ENCODE measurements at regions of chr4 and their contacts with region 1.

Region 1: GRCh38 chr4:36399762-36400353 is 118.4 kb downstream of the DTHD1 start:
- DNase-seq: peak; percentile 66
- ATAC-seq: peak; percentile 55
- H3K4me3 Mint-ChIP-seq: no peak overlapping the region
- H3K27ac Mint-ChIP-seq: no peak overlapping the region
- H3K4me1 Mint-ChIP-seq: peaks cover 5% of the 10 kb centered on the region
- H3K27me3 Mint-ChIP-seq: peaks cover 14% of the 10 kb centered on the region

Region 2: GRCh38 chr4:36208893-36209473 is 190.9 kb before region 1 on chr4:
- CTCF ChIA-PET with region 1: no interaction called
- DNase-seq: peak; percentile 78
- ATAC-seq: peak; percentile 88
- H3K4me3 Mint-ChIP-seq: peak overlapping the region; percentile 49
- H3K27ac Mint-ChIP-seq: peak overlapping the region; percentile 85
- H3K4me1 Mint-ChIP-seq: peaks cover 56% of the 10 kb centered on the region
- H3K27me3 Mint-ChIP-seq: no peaks in the 10 kb centered on the region

Region 3: GRCh38 chr4:36244257-36245079 is 155.4 kb before region 1 on chr4 and contains the start of gene ARAP2:
- CTCF ChIA-PET with region 1: interaction called, 21 read pairs
- DNase-seq: peak; percentile 80
- ATAC-seq: peak; percentile 77
- H3K4me3 Mint-ChIP-seq: peak within 1 kb of the TSS; percentile 93
- H3K27ac Mint-ChIP-seq: peak within 1 kb of the TSS; percentile 96
- H3K4me1 Mint-ChIP-seq: peaks cover 39% of the 10 kb centered on the region
- H3K27me3 Mint-ChIP-seq: no peaks in the 10 kb centered on the region
- total RNA-seq, gene ARAP2: 52.9 to 76.1 TPM

Region 4: GRCh38 chr4:36255577-36255976 is 144.3 kb before region 1 on chr4:
- CTCF ChIA-PET with region 1: interaction called, 12 read pairs
- DNase-seq: peak; percentile 81
- ATAC-seq: peak; percentile 84
- H3K4me3 Mint-ChIP-seq: peak overlapping the region; percentile 53
- H3K27ac Mint-ChIP-seq: peak overlapping the region; percentile 94
- H3K4me1 Mint-ChIP-seq: peaks cover 52% of the 10 kb centered on the region
- H3K27me3 Mint-ChIP-seq: no peaks in the 10 kb centered on the region

Region 5: DNA sequence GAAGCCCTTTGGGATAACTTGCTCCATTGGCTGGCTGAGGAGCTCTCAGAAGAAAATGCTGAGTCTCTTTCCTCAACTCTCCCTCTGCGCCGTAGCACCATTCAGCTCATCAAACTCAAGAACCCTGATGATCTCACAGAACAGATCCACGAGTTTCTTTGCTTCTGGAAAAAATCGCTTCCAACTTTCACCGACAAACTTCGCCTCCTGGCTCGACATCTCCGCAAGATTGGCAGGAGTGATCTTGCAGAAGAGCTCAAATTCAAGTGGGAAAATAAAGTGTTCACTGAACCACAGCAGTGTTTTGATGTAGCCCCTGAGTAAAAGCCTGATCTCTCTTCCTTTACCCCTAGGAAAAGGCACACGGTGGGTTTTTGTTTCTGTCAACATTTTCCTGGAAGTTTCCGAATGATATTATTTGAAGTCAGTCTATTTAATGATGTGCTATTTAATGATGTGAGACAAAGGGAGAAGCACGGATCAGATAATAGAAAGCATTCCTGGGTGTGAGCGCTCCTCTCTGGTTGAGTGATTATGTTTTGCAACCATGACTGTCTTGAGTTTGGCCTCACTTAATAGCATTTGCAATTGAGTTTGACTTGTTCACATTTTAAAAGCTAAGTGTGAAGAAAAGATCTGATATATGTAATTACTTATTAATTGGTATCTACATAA is 56.2 kb before region 1 on chr4:
- CTCF ChIA-PET with region 1: interaction called, 64 read pairs
- DNase-seq: no peak
- ATAC-seq: no peak
- H3K4me3 Mint-ChIP-seq: no peak overlapping the region
- H3K27ac Mint-ChIP-seq: no peak overlapping the region
- H3K4me1 Mint-ChIP-seq: peaks cover 6% of the 10 kb centered on the region
- H3K27me3 Mint-ChIP-seq: no peaks in the 10 kb centered on the region

Region 6: GRCh38 chr4:36351082-36351666 is 48.7 kb before region 1 on chr4:
- CTCF ChIA-PET with region 1: interaction called, 64 read pairs
- DNase-seq: peak; percentile 84
- ATAC-seq: peak; percentile 80
- H3K4me3 Mint-ChIP-seq: no peak overlapping the region
- H3K27ac Mint-ChIP-seq: no peak overlapping the region
- H3K4me1 Mint-ChIP-seq: peaks cover 35% of the 10 kb centered on the region
- H3K27me3 Mint-ChIP-seq: no peaks in the 10 kb centered on the region

Region 7: GRCh38 chr4:36363024-36363423 is 36.8 kb before region 1 on chr4:
- CTCF ChIA-PET with region 1: interaction called, 23 read pairs
- DNase-seq: no peak
- ATAC-seq: no peak
- H3K4me3 Mint-ChIP-seq: no peak overlapping the region
- H3K27ac Mint-ChIP-seq: no peak overlapping the region
- H3K4me1 Mint-ChIP-seq: no peaks in the 10 kb centered on the region
- H3K27me3 Mint-ChIP-seq: no peaks in the 10 kb centered on the region

Region 8: GRCh38 chr4:36385951-36386571 is 13.8 kb before region 1 on chr4:
- CTCF ChIA-PET with region 1: interaction called, 23 read pairs
- DNase-seq: peak; percentile 82
- ATAC-seq: peak; percentile 94
- H3K4me3 Mint-ChIP-seq: peak overlapping the region; percentile 40
- H3K27ac Mint-ChIP-seq: peak overlapping the region; percentile 83
- H3K4me1 Mint-ChIP-seq: peaks cover 25% of the 10 kb centered on the region
- H3K27me3 Mint-ChIP-seq: peaks cover 26% of the 10 kb centered on the region

Measured in activated CD8-positive, alpha-beta memory T cell treated with anti-CD3 and anti-CD28 coated beads, Interleukin-2, amount 10 ng/mL, durations not matched to agents 7 days and 5 days (primary cell).